ENCODE measurements at regions of chr7 and their contacts with region 1.

Region 1: DNA sequence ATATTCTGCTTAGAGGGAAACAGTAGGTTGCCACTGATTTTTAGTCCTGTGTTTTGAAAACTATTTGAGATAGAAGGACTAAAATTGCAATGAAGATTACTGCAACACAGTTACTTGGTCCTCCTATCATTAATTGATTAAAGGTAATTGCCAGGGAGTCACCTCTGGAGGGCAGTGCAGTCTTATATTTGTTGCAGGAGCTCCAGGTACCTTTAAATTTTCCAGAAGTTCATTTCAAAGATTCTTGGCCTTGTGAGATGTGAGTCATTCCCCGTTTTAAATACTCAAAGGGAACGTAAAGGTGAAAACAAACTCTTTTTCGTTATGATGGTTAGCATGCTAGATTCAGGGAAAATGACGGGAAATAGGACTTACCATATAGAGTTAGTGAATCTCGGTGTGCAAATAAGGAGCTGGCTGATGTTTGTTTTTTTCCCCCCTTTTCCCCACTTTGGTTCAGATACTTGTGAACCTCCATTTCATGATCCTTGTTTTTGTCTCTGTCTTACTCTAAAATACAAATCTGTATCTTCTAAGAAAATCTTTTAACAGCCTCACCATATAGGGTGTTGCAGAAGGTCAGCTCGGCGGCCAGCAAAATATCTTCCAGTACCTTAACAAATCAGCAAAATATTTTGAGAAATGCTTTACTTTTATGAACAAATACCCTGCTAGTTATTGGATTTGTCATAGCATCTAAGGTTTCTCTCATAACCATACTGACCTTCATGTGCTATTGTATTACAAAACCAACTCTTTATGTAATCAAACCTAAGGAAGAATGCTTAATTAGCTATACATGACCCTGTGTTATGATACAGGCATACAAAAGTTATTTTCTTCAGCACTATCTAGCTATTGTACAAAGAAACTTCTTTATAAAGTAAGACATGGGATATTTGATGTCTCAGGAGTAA is 143.0 kb upstream of the HDAC9 start:
- DNase-seq: peak; percentile 42
- H3K4me3 ChIP-seq: no peak overlapping the region
- H3K27ac ChIP-seq: no peak overlapping the region
- H3K4me1 ChIP-seq: no peaks in the 10 kb centered on the region
- H3K27me3 ChIP-seq: no peaks in the 10 kb centered on the region
- CTCF ChIP-seq: peak in 3 of 4 experiments; percentile 28 to 72 (median 69)
- POLR2A ChIP-seq: no peak

Region 2: GRCh38 chr7:18109762-18110161 is 242.8 kb before region 1 on chr7:
- intact Hi-C with region 1: no loop called
- DNase-seq: no peak
- H3K4me3 ChIP-seq: no peak overlapping the region
- H3K27ac ChIP-seq: no peak overlapping the region
- H3K4me1 ChIP-seq: no peaks in the 10 kb centered on the region
- H3K27me3 ChIP-seq: no peaks in the 10 kb centered on the region
- CTCF ChIP-seq: no peak
- POLR2A ChIP-seq: no peak

Region 3: GRCh38 chr7:18570890-18571478 is 218.4 kb after region 1 on chr7:
- intact Hi-C with region 1: loop called (anchors 5 kb)
- DNase-seq: peak; percentile 32
- H3K4me3 ChIP-seq: no peak overlapping the region
- H3K27ac ChIP-seq: no peak overlapping the region
- H3K4me1 ChIP-seq: no peaks in the 10 kb centered on the region
- H3K27me3 ChIP-seq: no peaks in the 10 kb centered on the region
- CTCF ChIP-seq: peak; percentile 10 to 71 (median 49)
- POLR2A ChIP-seq: no peak

Region 4: GRCh38 chr7:18666107-18666728 is 313.6 kb after region 1 on chr7:
- intact Hi-C with region 1: loop called (anchors 5 kb)
- DNase-seq: peak; percentile 20
- H3K4me3 ChIP-seq: no peak overlapping the region
- H3K27ac ChIP-seq: no peak overlapping the region
- H3K4me1 ChIP-seq: no peaks in the 10 kb centered on the region
- H3K27me3 ChIP-seq: no peaks in the 10 kb centered on the region
- CTCF ChIP-seq: peak; percentile 31 to 60 (median 46)
- POLR2A ChIP-seq: no peak